Activated naive CD4-positive, alpha-beta T cell treated with anti-CD3 and anti-CD28 coated beads, Interleukin-2, amount 10 ng/mL, durations not matched to agents 7 days and 5 days (primary cell): ENCODE measurements at regions of chr2 and their contacts with region 1.

Region 1: GRCh38 chr2:68925295-68925896 is 27.3 kb downstream of the GKN2 start:
- DNase-seq: peak; percentile 70
- H3K4me3 Mint-ChIP-seq: no peak overlapping the region
- H3K27ac Mint-ChIP-seq: no peak overlapping the region
- H3K4me1 Mint-ChIP-seq: peaks cover 8% of the 10 kb centered on the region
- H3K27me3 Mint-ChIP-seq: peaks cover 30% of the 10 kb centered on the region

Region 2: GRCh38 chr2:68467077-68467960 is 458.1 kb before region 1 on chr2 and contains the starts of genes APLF and FBXO48:
- CTCF ChIA-PET with region 1: interaction called, 65 read pairs
- DNase-seq: peak; percentile 99
- H3K4me3 Mint-ChIP-seq: peak within 1 kb of the TSS; percentile 94
- H3K27ac Mint-ChIP-seq: peak within 1 kb of the TSS; percentile 96
- H3K4me1 Mint-ChIP-seq: peaks cover 49% of the 10 kb centered on the region
- H3K27me3 Mint-ChIP-seq: no peaks in the 10 kb centered on the region

Region 3: DNA sequence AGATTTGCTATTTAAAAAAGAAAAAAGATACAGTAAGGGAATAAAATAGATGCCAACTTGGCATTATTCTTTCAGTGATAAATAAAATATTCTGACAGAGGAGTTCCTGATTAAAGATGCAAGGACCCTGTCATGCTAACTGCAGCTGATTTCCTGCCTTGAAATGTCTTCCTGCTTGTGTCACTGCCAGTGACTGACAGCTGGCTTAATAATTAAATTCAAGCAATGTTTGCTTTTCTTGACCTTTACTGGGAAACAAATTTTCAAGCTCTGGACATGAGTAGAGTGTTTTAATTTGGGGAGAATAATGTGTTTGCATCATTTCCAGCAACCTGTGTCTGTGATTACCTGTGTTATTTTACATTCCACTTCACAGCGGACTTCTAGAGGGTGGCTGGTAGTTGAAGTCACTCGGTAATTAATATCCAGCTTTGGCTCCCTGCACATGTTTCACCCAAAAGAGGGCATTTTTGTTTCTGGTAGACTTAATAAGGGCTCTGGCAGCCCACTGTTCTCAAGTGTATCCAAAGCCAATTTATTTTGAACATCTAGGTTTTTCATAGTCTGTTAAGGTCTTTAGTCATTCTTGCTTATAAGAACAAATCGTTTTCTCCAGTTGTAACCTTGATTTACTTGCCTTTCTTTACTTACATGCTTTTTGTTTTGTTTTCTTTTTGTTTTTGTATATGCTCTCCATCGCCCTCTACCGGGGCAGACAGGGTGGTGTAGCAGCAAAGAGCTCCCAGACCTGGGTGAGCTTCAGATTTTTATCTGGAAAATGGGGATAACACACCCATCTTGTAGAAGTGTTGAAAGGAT is 330.5 kb before region 1 on chr2:
- CTCF ChIA-PET with region 1: interaction called, 14 read pairs
- DNase-seq: peak; percentile 65
- H3K4me3 Mint-ChIP-seq: no peak overlapping the region
- H3K27ac Mint-ChIP-seq: no peak overlapping the region
- H3K4me1 Mint-ChIP-seq: peaks cover 9% of the 10 kb centered on the region
- H3K27me3 Mint-ChIP-seq: peaks cover 18% of the 10 kb centered on the region

Region 4: GRCh38 chr2:68730828-68731227 is 194.6 kb before region 1 on chr2:
- CTCF ChIA-PET with region 1: no interaction called
- DNase-seq: no peak
- H3K4me3 Mint-ChIP-seq: no peak overlapping the region
- H3K27ac Mint-ChIP-seq: no peak overlapping the region
- H3K4me1 Mint-ChIP-seq: peaks cover 47% of the 10 kb centered on the region
- H3K27me3 Mint-ChIP-seq: no peaks in the 10 kb centered on the region

Region 5: DNA sequence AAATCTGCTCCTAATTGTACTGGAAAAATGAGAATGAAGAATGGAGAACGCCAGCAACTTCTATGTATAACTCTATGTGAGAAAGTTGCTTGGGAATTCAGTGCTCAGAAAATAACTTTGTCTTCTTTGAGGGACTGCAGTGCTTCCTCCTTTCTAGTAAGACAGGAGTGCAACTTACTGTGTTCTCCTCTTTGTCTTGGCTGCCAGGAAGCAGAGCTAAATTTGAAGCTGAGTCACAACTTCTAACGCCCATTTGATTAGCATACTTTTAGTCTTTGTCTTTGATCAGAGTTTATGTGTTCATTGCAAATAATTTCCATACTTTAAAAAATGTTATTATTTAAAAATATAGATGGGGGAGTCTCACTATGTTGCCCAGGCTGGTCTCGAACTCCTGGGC is 184.2 kb before region 1 on chr2:
- CTCF ChIA-PET with region 1: interaction called, 13 read pairs
- DNase-seq: no peak
- H3K4me3 Mint-ChIP-seq: no peak overlapping the region
- H3K27ac Mint-ChIP-seq: peak overlapping the region; percentile 77
- H3K4me1 Mint-ChIP-seq: peaks cover 88% of the 10 kb centered on the region
- H3K27me3 Mint-ChIP-seq: no peaks in the 10 kb centered on the region

Region 6: GRCh38 chr2:68774569-68775271 is 150.7 kb before region 1 on chr2:
- CTCF ChIA-PET with region 1: interaction called, 11 read pairs
- DNase-seq: peak; percentile 66
- H3K4me3 Mint-ChIP-seq: peak overlapping the region; percentile 72
- H3K27ac Mint-ChIP-seq: peak overlapping the region; percentile 91
- H3K4me1 Mint-ChIP-seq: peaks cover 89% of the 10 kb centered on the region
- H3K27me3 Mint-ChIP-seq: no peaks in the 10 kb centered on the region

Region 7: DNA sequence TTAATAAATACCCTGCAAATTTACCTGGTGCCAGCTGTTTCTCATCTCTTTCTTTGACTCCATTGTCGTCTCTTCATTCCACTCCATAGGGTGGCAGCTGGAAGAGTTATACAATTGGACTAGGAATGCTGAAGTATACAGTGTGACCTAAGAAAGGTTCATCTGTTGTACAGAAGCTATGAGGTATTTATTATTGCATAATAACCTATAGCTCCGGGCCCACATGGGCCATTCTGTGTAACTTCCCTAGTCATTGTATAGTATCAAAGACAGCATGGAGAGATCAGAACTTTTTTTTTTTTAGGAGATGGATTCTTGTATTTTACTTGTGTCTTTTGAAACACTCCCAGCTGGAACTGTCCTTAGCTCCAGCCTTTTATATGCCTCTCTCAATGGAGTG is 80.4 kb before region 1 on chr2:
- CTCF ChIA-PET with region 1: interaction called, 30 read pairs
- DNase-seq: no peak
- H3K4me3 Mint-ChIP-seq: no peak overlapping the region
- H3K27ac Mint-ChIP-seq: no peak overlapping the region
- H3K4me1 Mint-ChIP-seq: no peaks in the 10 kb centered on the region
- H3K27me3 Mint-ChIP-seq: peaks cover 37% of the 10 kb centered on the region

Region 8: GRCh38 chr2:68936427-68936826 is 11.0 kb after region 1 on chr2:
- CTCF ChIA-PET with region 1: interaction called, 31 read pairs
- DNase-seq: no peak
- H3K4me3 Mint-ChIP-seq: no peak overlapping the region
- H3K27ac Mint-ChIP-seq: no peak overlapping the region
- H3K4me1 Mint-ChIP-seq: no peaks in the 10 kb centered on the region
- H3K27me3 Mint-ChIP-seq: peaks cover 49% of the 10 kb centered on the region

Region 9: GRCh38 chr2:68968221-68968620 is 42.8 kb after region 1 on chr2:
- CTCF ChIA-PET with region 1: no interaction called
- DNase-seq: no peak
- H3K4me3 Mint-ChIP-seq: no peak overlapping the region
- H3K27ac Mint-ChIP-seq: no peak overlapping the region
- H3K4me1 Mint-ChIP-seq: no peaks in the 10 kb centered on the region
- H3K27me3 Mint-ChIP-seq: peaks cover 18% of the 10 kb centered on the region

Region 10: DNA sequence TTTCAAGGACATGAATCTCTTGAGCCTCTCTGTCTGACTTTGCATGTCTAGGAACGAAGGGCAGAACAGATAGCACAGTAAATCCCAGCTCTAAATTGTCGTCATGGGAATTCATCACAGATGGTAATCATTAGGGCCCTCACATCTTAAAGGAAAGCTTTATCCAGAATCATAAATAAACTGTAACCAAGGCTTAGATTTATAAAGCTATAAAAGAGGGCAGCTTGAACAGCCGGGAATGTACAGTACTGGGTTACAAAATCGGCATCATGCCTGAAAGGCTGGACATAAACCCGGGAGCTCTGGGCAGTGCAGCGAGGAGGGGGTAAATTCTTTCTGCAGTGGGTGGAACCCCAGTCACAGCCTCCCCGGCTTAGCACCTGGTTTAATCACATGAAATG is 317.3 kb after region 1 on chr2:
- CTCF ChIA-PET with region 1: no interaction called
- DNase-seq: no peak
- H3K4me3 Mint-ChIP-seq: no peak overlapping the region
- H3K27ac Mint-ChIP-seq: no peak overlapping the region
- H3K4me1 Mint-ChIP-seq: no peaks in the 10 kb centered on the region
- H3K27me3 Mint-ChIP-seq: peaks cover 34% of the 10 kb centered on the region